Psoas muscle (tissue), 8 donors: ENCODE measurements at regions of chr1 and their contacts with region 1.

Region 1: DNA sequence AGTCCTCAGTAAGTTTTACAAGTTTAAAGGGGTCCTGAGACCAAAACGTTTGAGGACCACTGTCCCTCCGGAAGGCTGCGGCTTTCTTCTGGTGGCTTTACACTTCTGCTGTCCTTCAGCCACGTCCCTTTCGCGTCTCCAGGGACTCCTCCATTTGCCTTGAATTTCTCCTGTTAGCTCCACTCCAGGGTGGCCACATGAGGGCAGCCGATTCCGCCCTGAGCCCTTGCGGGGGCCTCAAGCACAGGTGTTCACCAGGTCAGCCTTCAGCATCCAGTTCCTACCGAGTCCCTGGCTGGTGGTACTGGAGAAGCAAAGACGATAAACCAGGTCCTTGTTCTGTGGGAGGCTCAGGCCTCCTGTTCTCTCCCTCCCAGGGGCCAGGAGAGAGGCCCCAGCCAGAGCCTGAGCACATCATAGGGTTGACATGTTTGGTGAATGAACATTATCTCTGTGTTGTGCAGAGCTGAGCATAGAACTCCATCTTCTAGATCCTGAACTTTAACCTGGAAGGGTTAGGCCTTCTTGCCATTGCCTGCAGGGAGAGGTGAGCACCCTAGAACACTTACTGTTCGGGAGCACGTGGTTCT is 27.4 kb upstream of the COQ8A start:
- DNase-seq: peak; percentile 56 to 84
- ATAC-seq: peak; percentile 92 to 97 (median 96)
- H3K4me3 ChIP-seq: no peak overlapping the region
- H3K27ac ChIP-seq: peak overlapping the region; percentile 50
- H3K4me1 ChIP-seq: peaks cover 3% of the 10 kb centered on the region
- H3K27me3 ChIP-seq: no peaks in the 10 kb centered on the region
- CTCF ChIP-seq: peak; percentile 78

Region 2: DNA sequence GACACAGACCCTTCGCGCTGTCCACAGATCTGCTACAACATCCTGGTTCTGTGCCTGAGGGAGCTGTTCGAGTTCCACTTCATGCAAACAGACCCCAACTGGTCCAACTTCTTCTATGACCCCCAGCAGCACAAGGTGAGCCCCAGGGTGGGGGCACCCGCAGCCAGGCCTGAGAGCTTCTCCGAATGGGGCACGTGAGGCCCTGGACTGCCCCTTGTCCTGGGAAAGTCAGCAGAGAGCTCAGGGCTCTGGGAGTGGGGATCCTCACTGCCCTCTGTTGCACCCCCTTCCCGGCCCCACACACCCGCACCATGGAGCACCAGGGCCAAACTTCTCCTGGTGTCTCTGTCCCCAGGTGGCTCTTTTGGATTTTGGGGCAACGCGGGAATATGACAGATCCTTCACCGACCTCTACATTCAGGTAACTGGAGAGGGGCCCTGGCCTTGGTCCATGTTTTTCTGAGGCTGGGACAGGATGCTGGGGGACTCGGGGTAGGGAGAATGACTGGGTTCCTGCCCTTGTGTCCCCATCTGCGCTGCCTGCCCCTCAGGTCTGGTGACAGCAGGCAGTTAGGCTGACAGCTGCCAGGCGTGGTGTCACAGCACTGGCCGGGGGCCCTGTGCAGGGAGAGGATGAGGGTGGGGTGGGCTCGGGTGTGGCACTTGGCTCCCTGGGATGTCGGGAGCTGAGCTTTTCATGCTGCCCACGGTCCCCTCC is 72.0 kb after region 1 on chr1:
- intact Hi-C with region 1: loop called (anchors 2 to 5 kb)
- DNase-seq: peak in 1 of 2 donors; percentile 87
- ATAC-seq: peak; percentile 24 to 51 (median 36)
- H3K4me3 ChIP-seq: no peak overlapping the region
- H3K27ac ChIP-seq: peak overlapping the region; percentile 85
- H3K4me1 ChIP-seq: peaks cover 91% of the 10 kb centered on the region
- H3K27me3 ChIP-seq: no peaks in the 10 kb centered on the region
- CTCF ChIP-seq: no peak

Region 3: DNA sequence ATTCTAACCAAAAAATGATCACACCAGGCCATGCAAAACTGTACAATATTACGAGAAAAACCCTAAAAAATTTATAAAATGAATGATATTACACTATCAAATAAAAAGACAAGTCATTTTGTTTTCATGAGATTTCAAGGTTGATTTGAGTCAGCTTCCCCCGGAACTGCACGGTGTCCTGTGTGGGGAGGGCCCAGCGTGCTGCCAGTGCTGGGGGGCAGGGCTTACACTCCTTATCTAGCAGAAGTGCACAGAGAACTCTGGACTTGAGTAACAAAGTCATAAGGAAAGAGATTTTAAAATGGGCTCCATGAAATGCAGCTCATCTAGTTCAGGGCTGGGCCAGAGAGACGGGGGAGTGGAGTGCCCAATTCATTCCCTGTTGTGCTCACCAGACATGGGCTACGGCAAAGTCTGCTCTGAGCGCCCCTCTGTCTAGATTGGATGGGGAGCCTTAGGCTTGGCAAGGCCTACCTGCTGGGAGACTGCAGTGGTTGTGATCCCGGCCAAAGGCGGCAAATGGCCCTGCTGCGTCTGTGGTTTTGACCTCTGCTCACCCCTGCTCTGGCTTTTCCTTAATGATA is 77.5 kb after region 1 on chr1:
- intact Hi-C with region 1: loop called (anchors 2 to 5 kb)
- DNase-seq: peak; percentile 34 to 71
- ATAC-seq: peak; percentile 20 to 47 (median 33)
- H3K4me3 ChIP-seq: no peak overlapping the region
- H3K27ac ChIP-seq: peak overlapping the region; percentile 85
- H3K4me1 ChIP-seq: peaks cover 56% of the 10 kb centered on the region
- H3K27me3 ChIP-seq: no peaks in the 10 kb centered on the region
- CTCF ChIP-seq: no peak

Region 4: GRCh38 chr1:227318003-227318852 is 405.5 kb after region 1 on chr1 and contains the start of gene CDC42BPA:
- intact Hi-C with region 1: loop called in 1 of 2 experiments (anchors 10 kb)
- DNase-seq: peak; percentile 86 to 91
- ATAC-seq: peak; percentile 78 to 84 (median 80)
- H3K4me3 ChIP-seq: peak within 1 kb of the TSS; percentile 81
- H3K27ac ChIP-seq: peak within 1 kb of the TSS; percentile 95
- H3K4me1 ChIP-seq: peaks cover 9% of the 10 kb centered on the region
- H3K27me3 ChIP-seq: no peaks in the 10 kb centered on the region
- CTCF ChIP-seq: no peak
- total RNA-seq, gene CDC42BPA: 14.1 to 23.0 (median 20.2) TPM

Region 5: DNA sequence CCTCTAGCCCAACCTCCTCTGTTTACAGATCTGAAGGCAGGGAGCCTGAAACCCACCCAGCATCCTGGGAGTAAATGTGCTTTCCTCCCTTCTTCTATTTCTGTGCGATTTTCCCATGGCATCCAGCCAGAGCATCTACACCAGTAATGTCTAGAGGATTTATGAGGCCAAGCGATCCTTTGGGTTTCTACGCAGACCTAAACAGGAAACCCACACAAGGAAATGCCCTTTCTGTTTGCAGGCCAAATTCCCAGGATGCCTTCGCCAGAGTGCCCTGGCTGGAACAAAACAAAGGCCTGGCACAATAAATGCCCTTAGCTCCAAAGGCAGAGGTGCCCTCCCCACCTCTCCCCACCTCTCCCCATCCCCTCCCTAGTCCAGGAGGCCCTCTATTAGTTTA is 516.1 kb after region 1 on chr1:
- intact Hi-C with region 1: loop called (anchors 5 to 10 kb)
- DNase-seq: no peak
- ATAC-seq: no peak
- H3K4me3 ChIP-seq: no peak overlapping the region
- H3K27ac ChIP-seq: peak overlapping the region; percentile 37
- H3K4me1 ChIP-seq: peaks cover 16% of the 10 kb centered on the region
- H3K27me3 ChIP-seq: no peaks in the 10 kb centered on the region
- CTCF ChIP-seq: no peak